ENCODE measurements at regions of chr7 and their contacts with region 1.

Region 1: GRCh38 chr7:71733107-71733870 is 601.3 kb downstream of the GALNT17 start:
- DNase-seq: peak; percentile 65 to 89 (median 76)
- ATAC-seq: peak; percentile 57 to 87 (median 82)
- H3K4me3 ChIP-seq: peak overlapping the region in 7 of 12 donors; percentile 22 to 46 (median 36)
- H3K27ac ChIP-seq: no peak overlapping the region
- H3K4me1 ChIP-seq: peaks cover 0 to 6% (median 0%) of the 10 kb centered on the region in 12 donors
- H3K27me3 ChIP-seq: peaks cover 0 to 5% (median 0%) of the 10 kb centered on the region in 9 donors
- CTCF ChIP-seq: peak; percentile 80 to 92 (median 89)
- POLR2A ChIP-seq: no peak

Region 2: DNA sequence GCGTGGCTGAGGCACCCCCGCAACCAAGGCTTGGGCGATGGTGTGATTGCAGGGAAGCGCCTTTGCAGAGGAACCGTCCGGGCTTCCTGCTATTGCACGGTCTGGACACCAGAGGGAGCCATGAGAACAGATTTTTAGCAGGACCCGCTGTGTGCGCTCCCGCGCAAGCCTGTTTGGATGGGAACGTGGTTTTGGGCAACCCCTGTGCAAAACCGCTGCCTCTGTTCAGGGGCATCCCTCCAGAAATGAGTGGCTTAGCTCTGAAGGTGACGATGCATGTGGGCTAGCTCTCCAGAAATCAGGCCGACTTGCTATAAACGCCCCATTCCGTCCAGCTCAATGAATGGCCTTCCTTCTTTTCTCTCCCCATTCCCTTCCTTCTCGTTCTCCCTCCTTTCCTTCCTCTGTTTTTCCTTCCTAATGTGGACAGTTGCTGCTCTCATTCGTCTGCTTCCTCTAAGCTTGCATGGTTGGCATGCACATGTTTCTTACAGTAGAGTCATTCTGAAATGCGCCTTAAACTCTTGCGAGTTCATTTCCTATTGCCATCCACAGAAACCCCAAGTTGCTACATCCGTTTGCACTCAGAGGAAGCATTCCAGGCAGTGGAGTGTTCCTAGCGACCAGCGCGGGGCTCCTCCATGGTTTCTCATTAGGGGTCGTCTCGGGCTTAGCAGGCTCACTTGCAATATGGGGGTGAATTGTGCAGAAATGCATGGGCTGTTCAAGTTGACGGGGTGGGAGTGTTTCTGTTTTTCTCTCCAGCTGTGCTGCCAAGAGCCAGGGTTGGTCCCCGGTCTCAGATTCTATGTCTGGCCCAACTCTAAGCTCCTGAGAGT is 903.8 kb before region 1 on chr7:
- intact Hi-C with region 1: loop called in 6 of 10 experiments (anchors 1 to 10 kb)
- DNase-seq: peak in 4 of 5 donors; percentile 32 to 79 (median 52)
- ATAC-seq: peak in 3 of 4 donors; percentile 65 to 68 (median 66)
- H3K4me3 ChIP-seq: peak overlapping the region in 7 of 12 donors; percentile 7 to 25 (median 20)
- H3K27ac ChIP-seq: no peak overlapping the region
- H3K4me1 ChIP-seq: peaks cover 0 to 12% (median 2%) of the 10 kb centered on the region in 12 donors
- H3K27me3 ChIP-seq: peaks cover 0 to 24% (median 4%) of the 10 kb centered on the region in 9 donors
- CTCF ChIP-seq: peak; percentile 59 to 94 (median 81)
- POLR2A ChIP-seq: no peak

Region 3: DNA sequence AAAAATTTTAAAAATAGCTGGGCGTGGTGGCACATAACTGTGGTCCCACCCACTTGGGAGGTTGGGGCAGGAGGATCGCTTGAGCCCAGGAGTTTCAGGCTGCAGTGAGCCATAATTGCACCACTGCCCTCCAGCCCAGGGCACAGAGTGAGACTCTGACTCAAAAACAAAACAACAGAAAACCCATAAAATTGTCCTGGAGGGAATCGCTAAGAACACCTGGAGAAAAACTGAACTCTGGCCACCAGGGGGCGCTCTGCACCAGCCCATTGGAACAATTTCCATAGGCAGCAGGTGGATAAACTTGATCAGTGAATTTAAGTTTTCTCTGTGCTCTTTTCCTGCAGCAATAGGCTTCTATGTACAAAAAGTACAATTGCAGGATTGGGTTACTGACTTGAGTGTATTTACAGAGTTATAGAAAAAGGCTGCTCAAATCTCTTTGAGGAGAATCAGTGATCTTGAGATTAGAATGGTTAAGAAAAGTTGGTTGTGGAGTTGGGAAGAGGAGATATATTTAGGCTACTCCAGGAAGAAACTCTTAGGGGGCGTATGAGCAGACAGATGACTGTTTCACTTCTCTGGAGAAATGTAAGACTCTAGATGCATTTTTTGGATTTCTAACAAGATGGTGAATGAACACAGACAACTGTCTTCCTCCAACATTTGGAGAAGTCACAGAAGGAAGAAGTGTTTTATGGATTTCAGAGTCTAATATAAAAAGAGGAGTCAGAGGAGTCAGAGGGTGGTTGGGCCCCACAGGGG is 876.2 kb before region 1 on chr7:
- intact Hi-C with region 1: loop called (anchors 1 to 2 kb)
- DNase-seq: peak; percentile 34 to 73 (median 50)
- ATAC-seq: peak in 1 of 4 donors; percentile 46
- H3K4me3 ChIP-seq: no peak overlapping the region
- H3K27ac ChIP-seq: no peak overlapping the region
- H3K4me1 ChIP-seq: no peaks in the 10 kb centered on the region
- H3K27me3 ChIP-seq: no peaks in the 10 kb centered on the region
- CTCF ChIP-seq: peak; percentile 77 to 97 (median 91)
- POLR2A ChIP-seq: no peak

Region 4: DNA sequence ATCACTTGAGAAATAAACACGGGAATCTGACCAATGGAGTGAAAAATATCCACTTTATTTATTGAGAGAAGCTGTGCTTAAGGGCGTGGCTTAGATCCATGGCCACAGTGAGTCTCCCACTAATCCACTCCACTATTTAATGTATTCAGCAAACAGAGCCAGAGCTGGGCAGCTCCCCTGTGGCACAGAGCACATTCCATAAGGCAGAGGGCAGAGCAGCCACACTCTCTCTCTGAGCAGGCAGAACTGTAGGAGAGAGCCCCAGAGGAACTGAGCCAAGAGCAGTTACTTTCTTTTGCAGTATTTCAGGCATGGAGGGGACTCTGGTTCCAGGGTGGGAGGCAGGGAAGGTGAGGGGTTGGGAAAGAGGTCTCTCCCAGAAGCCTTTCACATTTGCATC is 495.3 kb before region 1 on chr7:
- intact Hi-C with region 1: loop called in 2 of 10 experiments (anchors 10 kb)
- DNase-seq: peak in 4 of 5 donors; percentile 32 to 74 (median 46)
- ATAC-seq: peak; percentile 85 to 90 (median 88)
- H3K4me3 ChIP-seq: no peak overlapping the region
- H3K27ac ChIP-seq: peak overlapping the region in 11 of 12 donors; percentile 50 to 96 (median 84)
- H3K4me1 ChIP-seq: peaks cover 0 to 40% (median 17%) of the 10 kb centered on the region in 12 donors
- H3K27me3 ChIP-seq: no peaks in the 10 kb centered on the region
- CTCF ChIP-seq: peak in 10 of 12 donors; percentile 9 to 59 (median 30)
- POLR2A ChIP-seq: no peak

Region 5: GRCh38 chr7:71266912-71267311 is 466.4 kb before region 1 on chr7:
- intact Hi-C with region 1: loop called in 1 of 10 experiments (anchors 10 kb)
- DNase-seq: no peak
- ATAC-seq: no peak
- H3K4me3 ChIP-seq: no peak overlapping the region
- H3K27ac ChIP-seq: peak overlapping the region in 1 of 12 donors; percentile 22
- H3K4me1 ChIP-seq: peaks cover 0 to 27% (median 7%) of the 10 kb centered on the region in 12 donors
- H3K27me3 ChIP-seq: no peaks in the 10 kb centered on the region
- CTCF ChIP-seq: no peak
- POLR2A ChIP-seq: no peak

Region 6: DNA sequence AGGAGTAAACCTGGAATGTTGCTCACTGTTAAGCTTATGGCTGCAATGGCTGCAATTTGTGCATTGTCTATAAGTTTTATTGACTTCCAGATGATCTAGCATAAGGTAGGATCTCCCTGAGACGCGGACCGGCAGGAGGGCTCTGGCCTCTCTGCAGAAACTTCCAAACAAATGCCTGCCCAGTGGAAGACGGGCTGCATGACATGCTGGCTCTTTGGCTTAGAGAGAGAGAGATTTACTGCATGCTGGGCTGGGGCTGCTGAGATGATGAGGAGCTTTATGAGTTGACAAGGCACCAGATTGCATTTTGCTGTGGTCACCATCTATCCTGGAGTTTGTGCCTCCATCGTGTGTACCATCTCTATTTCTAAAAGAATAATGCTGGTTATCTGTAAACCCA is 408.1 kb before region 1 on chr7:
- intact Hi-C with region 1: no loop called
- DNase-seq: no peak
- ATAC-seq: no peak
- H3K4me3 ChIP-seq: no peak overlapping the region
- H3K27ac ChIP-seq: no peak overlapping the region
- H3K4me1 ChIP-seq: peaks cover 0 to 25% (median 5%) of the 10 kb centered on the region in 12 donors
- H3K27me3 ChIP-seq: no peaks in the 10 kb centered on the region
- CTCF ChIP-seq: no peak
- POLR2A ChIP-seq: no peak

Region 7: GRCh38 chr7:71414490-71414889 is 318.8 kb before region 1 on chr7:
- intact Hi-C with region 1: loop called in 1 of 10 experiments (anchors 10 kb)
- DNase-seq: peak; percentile 66 to 88 (median 77)
- ATAC-seq: peak; percentile 53 to 84 (median 76)
- H3K4me3 ChIP-seq: no peak overlapping the region
- H3K27ac ChIP-seq: peak overlapping the region in 4 of 12 donors; percentile 12 to 63 (median 23)
- H3K4me1 ChIP-seq: peaks cover 0 to 11% (median 3%) of the 10 kb centered on the region in 12 donors
- H3K27me3 ChIP-seq: no peaks in the 10 kb centered on the region
- CTCF ChIP-seq: no peak
- POLR2A ChIP-seq: no peak